ENCODE measurements at regions of chr4 and their contacts with region 1.

Region 1: DNA sequence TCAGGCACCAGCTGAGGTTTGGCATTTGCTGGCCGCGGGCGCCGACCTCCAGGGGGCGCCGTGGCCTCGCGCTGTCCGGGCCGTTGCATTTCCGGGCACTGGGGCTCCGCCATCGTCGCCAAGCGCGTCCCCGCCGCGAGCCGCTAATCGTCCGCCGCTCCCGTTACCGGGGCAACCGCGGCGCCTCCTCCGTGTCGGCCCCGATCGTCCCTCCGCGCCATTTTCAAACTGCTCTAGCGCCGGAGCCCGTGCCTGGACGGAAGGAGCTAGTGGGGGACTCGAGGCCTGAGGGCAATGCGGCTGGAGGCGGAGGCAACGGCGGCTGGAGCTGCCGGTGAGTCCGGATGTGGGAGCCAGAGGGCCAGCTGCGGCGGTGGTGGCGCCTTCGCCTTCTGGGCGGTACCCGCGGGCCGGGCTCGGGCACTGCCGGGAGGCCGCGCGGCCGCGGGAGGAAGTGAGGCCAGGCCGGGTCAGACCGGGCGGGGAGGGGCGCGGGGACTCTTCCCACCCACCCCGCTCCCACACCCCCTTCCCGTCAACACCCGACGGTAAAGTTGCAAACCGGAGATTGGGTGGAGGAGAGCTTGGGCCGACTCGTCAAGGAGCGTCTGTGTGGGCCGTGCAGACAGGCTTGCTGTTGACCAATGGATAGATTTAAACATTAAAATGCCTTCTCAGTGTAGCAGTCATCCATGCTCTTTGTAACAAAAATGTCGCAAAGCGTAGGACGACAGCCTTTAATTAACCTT is at the start of gene CEP135:
- DNase-seq: peak; percentile 91 to 94 (median 93)
- H3K4me3 ChIP-seq: peak within 1 kb of the TSS; percentile 54 to 65
- H3K4me3 Mint-ChIP-seq: peak within 1 kb of the TSS; percentile 88 to 97 (median 94)
- H3K27ac ChIP-seq: peak within 1 kb of the TSS; percentile 71
- H3K27ac Mint-ChIP-seq: peak within 1 kb of the TSS; percentile 93 to 98 (median 97)
- H3K4me1 ChIP-seq: peaks cover 45% of the 10 kb centered on the region
- H3K4me1 Mint-ChIP-seq: peaks cover 32 to 58% (median 48%) of the 10 kb centered on the region in 4 donors
- H3K27me3 ChIP-seq: no peaks in the 10 kb centered on the region
- H3K27me3 Mint-ChIP-seq: no peaks in the 10 kb centered on the region
- total RNA-seq, gene CEP135: 32.5 to 35.9 TPM

Region 2: GRCh38 chr4:55791666-55792065 is 157.2 kb before region 1 on chr4:
- CTCF ChIA-PET with region 1: no interaction called
- POLR2A ChIA-PET with region 1: no interaction called
- intact Hi-C with region 1: no loop called
- DNase-seq: no peak
- H3K4me3 ChIP-seq: no peak overlapping the region
- H3K4me3 Mint-ChIP-seq: no peak overlapping the region
- H3K27ac ChIP-seq: no peak overlapping the region
- H3K27ac Mint-ChIP-seq: no peak overlapping the region
- H3K4me1 ChIP-seq: no peaks in the 10 kb centered on the region
- H3K4me1 Mint-ChIP-seq: peaks cover 0 to 4% (median 0%) of the 10 kb centered on the region in 4 donors
- H3K27me3 ChIP-seq: peaks cover 5% of the 10 kb centered on the region
- H3K27me3 Mint-ChIP-seq: peaks cover 19 to 36% of the 10 kb centered on the region in 2 donors

Region 3: DNA sequence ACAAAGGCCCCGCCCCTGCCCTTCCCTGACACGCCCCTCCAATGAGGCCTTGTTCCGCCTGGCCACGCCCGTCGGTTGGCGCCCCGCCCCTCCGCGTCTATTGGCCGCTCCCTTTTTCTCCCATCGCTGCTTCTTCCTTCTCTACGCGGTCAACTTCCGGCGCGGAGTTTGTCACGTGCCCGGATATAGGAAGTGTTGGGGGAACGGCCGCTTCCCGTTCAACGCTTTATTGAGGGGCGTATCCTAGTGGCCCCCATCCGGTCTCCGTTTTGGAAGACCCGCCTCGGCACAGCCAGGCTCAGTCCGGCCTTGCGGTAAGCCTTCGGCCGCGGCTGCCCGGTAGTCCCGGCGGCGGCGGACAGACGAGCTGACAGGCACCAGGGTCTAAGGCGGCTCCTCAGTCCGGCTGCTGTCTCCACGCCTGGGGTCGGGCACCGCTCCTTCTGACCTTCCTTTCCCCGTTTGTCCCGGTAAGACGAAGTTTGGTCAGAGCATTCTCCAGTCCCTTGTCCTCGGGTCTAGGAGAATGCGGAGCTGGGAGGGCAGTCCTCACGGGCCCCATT is 95.3 kb before region 1 on chr4 and contains the start of gene EXOC1:
- CTCF ChIA-PET with region 1: interaction called, 5 read pairs
- POLR2A ChIA-PET with region 1: interaction called, 16 read pairs
- intact Hi-C with region 1: loop called (anchors 1 kb)
- DNase-seq: peak; percentile 93 to 96 (median 93)
- H3K4me3 ChIP-seq: peak within 1 kb of the TSS; percentile 83 to 97
- H3K4me3 Mint-ChIP-seq: peak within 1 kb of the TSS in 4 of 8 donors; percentile 40 to 67 (median 46)
- H3K27ac ChIP-seq: peak within 1 kb of the TSS; percentile 81
- H3K27ac Mint-ChIP-seq: peak within 1 kb of the TSS in 5 of 7 donors; percentile 36 to 96 (median 84)
- H3K4me1 ChIP-seq: peaks cover 44% of the 10 kb centered on the region
- H3K4me1 Mint-ChIP-seq: peaks cover 30 to 47% (median 38%) of the 10 kb centered on the region in 4 donors
- H3K27me3 ChIP-seq: no peaks in the 10 kb centered on the region
- H3K27me3 Mint-ChIP-seq: no peaks in the 10 kb centered on the region
- total RNA-seq, gene EXOC1: 41.9 to 50.7 TPM

Region 4: DNA sequence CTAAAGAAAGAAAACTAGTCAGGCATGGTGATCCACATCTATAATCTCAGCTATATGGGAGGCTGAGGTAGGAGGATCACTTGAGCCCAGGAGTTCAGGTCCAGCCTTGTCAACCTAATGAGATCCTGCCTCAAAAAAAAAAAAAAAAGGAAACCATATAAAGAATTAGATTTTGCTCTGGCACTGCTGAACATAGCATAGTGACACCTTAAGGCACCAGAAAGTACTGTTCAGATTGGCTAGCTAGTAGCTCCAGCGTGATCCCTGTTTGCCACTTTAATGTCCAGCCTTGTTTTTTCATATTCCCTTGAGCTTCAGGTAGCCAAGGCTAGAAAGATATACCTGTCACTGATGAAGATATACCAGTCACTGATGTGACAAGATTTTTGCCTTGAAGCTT is 61.3 kb before region 1 on chr4:
- CTCF ChIA-PET with region 1: interaction called, 13 read pairs
- POLR2A ChIA-PET with region 1: interaction called, 12 read pairs
- intact Hi-C with region 1: no loop called
- DNase-seq: no peak
- H3K4me3 ChIP-seq: no peak overlapping the region
- H3K4me3 Mint-ChIP-seq: no peak overlapping the region
- H3K27ac ChIP-seq: no peak overlapping the region
- H3K27ac Mint-ChIP-seq: peak overlapping the region in 3 of 7 donors; percentile 12 to 70 (median 13)
- H3K4me1 ChIP-seq: peaks cover 13% of the 10 kb centered on the region
- H3K4me1 Mint-ChIP-seq: peaks cover 13 to 25% (median 21%) of the 10 kb centered on the region in 4 donors
- H3K27me3 ChIP-seq: no peaks in the 10 kb centered on the region
- H3K27me3 Mint-ChIP-seq: no peaks in the 10 kb centered on the region

Region 5: DNA sequence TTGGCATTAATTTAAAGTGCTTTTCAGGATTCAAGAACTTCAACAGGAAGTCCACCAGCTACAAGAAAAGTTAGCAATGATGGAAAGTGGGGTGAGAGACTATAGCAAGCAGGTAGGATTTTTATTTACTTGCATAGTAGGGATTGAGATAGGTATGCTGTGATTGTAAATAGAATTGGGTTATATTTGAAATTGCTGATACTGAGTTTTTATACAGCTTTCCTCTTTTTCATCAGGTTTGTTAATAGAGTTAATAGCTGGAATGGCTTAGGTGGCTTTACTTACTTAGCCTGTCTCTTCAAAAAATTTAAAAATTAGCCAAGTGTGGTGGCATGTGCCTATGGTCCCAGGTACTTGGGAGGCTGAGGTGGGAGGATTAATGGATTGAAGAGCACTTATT is 10.8 kb after region 1 on chr4:
- CTCF ChIA-PET with region 1: interaction called, 17 read pairs
- POLR2A ChIA-PET with region 1: interaction called, 8 read pairs
- intact Hi-C with region 1: no loop called
- DNase-seq: no peak
- H3K4me3 ChIP-seq: no peak overlapping the region
- H3K4me3 Mint-ChIP-seq: no peak overlapping the region
- H3K27ac ChIP-seq: no peak overlapping the region
- H3K27ac Mint-ChIP-seq: peak overlapping the region in 1 of 7 donors; percentile 1
- H3K4me1 ChIP-seq: no peaks in the 10 kb centered on the region
- H3K4me1 Mint-ChIP-seq: peaks cover 0 to 17% (median 8%) of the 10 kb centered on the region in 4 donors
- H3K27me3 ChIP-seq: no peaks in the 10 kb centered on the region
- H3K27me3 Mint-ChIP-seq: no peaks in the 10 kb centered on the region

Region 6: DNA sequence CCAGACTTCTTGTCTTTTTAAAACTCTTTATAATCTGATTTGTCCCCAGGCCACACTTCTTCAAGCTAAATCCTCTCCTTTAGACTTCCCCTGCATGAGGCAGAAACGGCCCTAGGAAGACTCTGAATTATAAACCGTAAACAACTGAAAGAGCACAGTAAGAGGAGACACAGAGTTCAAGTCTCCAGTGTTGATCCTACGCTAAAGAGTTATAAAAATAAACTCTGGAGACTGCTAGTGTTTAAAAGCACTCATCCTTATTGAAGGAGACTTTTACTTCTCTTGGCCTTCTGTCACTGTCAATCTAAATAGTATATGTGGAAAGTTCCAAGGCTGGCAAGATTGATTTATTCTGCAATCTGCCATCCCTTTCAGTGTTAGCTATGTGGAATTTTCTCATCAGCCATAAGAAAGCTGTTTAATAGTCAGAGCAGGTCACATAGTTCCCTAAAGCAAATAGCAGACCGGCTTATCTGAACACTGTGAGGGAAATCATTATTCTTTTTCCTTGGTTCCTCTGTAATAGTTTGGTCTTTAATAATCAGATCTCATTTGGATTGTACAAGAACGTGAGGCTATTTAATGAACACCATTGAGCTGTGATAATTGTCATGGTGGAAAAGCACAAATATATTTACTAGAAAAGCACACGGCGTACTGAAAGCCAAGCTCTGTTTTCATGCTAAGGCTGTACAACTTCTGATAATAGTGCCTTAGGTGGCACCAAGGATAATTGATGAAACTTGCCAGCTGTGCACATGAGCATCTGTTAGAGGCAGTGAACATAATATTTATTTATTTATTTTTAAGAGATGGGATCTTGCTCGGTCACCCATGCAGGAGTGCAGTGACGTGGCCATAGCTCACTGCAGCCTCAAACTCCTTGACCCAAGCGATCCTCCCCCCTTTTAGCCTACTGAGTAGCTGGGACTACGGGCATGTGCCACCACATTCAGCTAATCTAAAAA is 157.6 kb after region 1 on chr4:
- CTCF ChIA-PET with region 1: no interaction called
- POLR2A ChIA-PET with region 1: no interaction called
- intact Hi-C with region 1: no loop called
- DNase-seq: no peak
- H3K4me3 ChIP-seq: no peak overlapping the region
- H3K4me3 Mint-ChIP-seq: no peak overlapping the region
- H3K27ac ChIP-seq: no peak overlapping the region
- H3K27ac Mint-ChIP-seq: no peak overlapping the region
- H3K4me1 ChIP-seq: no peaks in the 10 kb centered on the region
- H3K4me1 Mint-ChIP-seq: no peaks in the 10 kb centered on the region
- H3K27me3 ChIP-seq: no peaks in the 10 kb centered on the region
- H3K27me3 Mint-ChIP-seq: peaks cover 1 to 5% of the 10 kb centered on the region in 2 donors

Region 7: DNA sequence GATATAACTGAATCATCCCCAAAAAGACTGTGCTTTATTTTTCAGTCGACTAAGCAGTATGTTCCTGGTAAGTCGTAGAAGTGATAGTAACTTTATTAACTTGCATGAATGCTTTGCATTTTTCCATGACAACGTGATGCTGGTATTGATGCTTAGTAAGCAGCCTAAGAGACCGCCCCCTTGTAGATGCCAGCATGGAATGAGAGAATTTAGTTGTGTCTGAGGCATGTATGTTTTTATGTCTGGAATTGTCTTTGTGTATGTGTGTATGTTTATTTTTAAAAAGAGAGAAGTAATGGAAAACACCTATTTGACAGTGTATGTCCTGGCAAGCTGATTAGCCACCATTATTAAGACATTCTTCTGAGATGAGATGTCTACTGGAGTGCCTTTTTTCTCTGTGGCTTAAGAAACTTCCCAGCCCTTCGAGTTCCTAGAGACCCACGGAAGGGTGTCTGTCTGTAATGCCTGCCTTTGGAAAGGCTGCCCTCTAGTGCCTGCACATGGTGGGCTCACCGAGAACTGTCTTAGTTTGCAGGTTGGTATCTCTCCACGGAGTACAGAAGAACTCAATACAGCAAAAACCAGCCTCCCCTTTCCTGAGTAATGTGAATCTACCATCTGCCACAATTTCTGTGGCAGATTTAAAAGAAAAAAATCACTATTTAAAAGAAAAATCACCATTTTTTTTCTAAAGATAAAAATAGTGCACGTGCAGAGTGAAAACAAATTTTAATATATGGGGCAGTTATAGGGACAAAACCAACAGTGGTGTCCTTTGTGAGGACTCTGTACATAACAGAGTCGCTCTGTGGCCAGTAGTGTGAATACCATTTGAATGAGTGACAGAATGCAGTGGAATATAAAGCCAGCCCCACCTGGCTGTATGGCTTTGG is 352.5 kb after region 1 on chr4:
- CTCF ChIA-PET with region 1: interaction called, 8 read pairs
- POLR2A ChIA-PET with region 1: interaction called, 7 read pairs
- intact Hi-C with region 1: loop called (anchors 1 kb)
- DNase-seq: peak; percentile 42 to 53 (median 53)
- H3K4me3 ChIP-seq: peak overlapping the region in 1 of 2 donors; percentile 6
- H3K4me3 Mint-ChIP-seq: peak overlapping the region; percentile 31 to 76 (median 61)
- H3K27ac ChIP-seq: no peak overlapping the region
- H3K27ac Mint-ChIP-seq: peak overlapping the region in 3 of 7 donors; percentile 0 to 54 (median 9)
- H3K4me1 ChIP-seq: peaks cover 8% of the 10 kb centered on the region
- H3K4me1 Mint-ChIP-seq: peaks cover 8% of the 10 kb centered on the region in 4 donors
- H3K27me3 ChIP-seq: no peaks in the 10 kb centered on the region
- H3K27me3 Mint-ChIP-seq: peaks cover 0 to 5% of the 10 kb centered on the region in 2 donors

Region 8: GRCh38 chr4:56544573-56545131 is 595.8 kb after region 1 on chr4:
- CTCF ChIA-PET with region 1: interaction called, 9 read pairs
- POLR2A ChIA-PET with region 1: no interaction called
- intact Hi-C with region 1: loop called (anchors 1 kb)
- DNase-seq: peak; percentile 69 to 83 (median 78)
- H3K4me3 ChIP-seq: peak overlapping the region; percentile 37 to 42
- H3K4me3 Mint-ChIP-seq: peak overlapping the region; percentile 43 to 77 (median 64)
- H3K27ac ChIP-seq: no peak overlapping the region
- H3K27ac Mint-ChIP-seq: peak overlapping the region in 6 of 7 donors; percentile 7 to 79 (median 22)
- H3K4me1 ChIP-seq: peaks cover 13% of the 10 kb centered on the region
- H3K4me1 Mint-ChIP-seq: peaks cover 8 to 19% (median 8%) of the 10 kb centered on the region in 4 donors
- H3K27me3 ChIP-seq: no peaks in the 10 kb centered on the region
- H3K27me3 Mint-ChIP-seq: peaks cover 4% of the 10 kb centered on the region in 2 donors

Region 9: DNA sequence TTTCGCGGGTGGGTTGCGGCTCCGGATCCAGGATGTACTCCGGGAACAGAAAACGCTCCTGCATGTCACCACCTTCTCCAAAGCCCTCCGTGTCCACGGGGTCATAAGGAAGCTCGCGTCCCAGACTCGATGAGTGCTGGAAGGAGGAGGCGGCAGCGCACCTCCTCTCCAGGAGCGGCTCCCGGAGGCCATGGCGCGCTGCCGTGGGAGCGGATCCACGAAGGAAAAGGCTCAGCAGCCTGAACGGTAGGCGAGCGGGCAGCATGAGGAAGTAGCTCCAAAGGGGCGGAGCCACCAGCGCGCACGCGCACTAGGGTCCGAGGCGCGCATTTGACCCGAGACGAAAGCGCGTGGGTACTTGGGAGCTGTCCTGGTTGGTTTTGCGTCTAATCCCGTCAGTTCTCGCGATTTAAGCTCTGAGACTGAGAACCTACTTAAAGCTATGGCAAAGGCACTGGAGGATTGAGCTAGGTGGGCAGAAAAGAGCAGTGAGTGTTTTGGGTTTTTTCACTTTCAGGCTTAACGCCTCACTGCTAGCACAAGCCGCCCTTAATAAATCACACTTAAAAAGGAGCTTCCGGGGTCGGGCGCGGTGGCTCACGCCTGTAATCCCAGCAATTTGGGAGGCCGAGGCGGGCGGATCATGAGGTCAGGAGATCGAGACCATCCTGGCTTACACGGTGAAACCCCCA is 1028.6 kb after region 1 on chr4 and contains the start of gene NOA1:
- CTCF ChIA-PET with region 1: interaction called, 7 read pairs
- POLR2A ChIA-PET with region 1: interaction called, 34 read pairs
- intact Hi-C with region 1: loop called (anchors 5 kb)
- DNase-seq: peak; percentile 98 to 99 (median 99)
- H3K4me3 ChIP-seq: peak within 1 kb of the TSS; percentile 96 to 100
- H3K4me3 Mint-ChIP-seq: peak within 1 kb of the TSS; percentile 96 to 100 (median 99)
- H3K27ac ChIP-seq: peak within 1 kb of the TSS; percentile 85
- H3K27ac Mint-ChIP-seq: peak within 1 kb of the TSS; percentile 93 to 99 (median 98)
- H3K4me1 ChIP-seq: peaks cover 56% of the 10 kb centered on the region
- H3K4me1 Mint-ChIP-seq: peaks cover 28 to 79% (median 46%) of the 10 kb centered on the region in 4 donors
- H3K27me3 ChIP-seq: no peaks in the 10 kb centered on the region
- H3K27me3 Mint-ChIP-seq: no peaks in the 10 kb centered on the region
- total RNA-seq, gene NOA1: 20.1 to 20.4 TPM